ENCODE measurements at regions of chr20 and their contacts with region 1.

Region 1: GRCh38 chr20:38033310-38034107 is at the starts of genes RPRD1B and TTI1:
- DNase-seq: peak; percentile 93
- ATAC-seq: peak; percentile 85
- H3K4me3 Mint-ChIP-seq: peak within 1 kb of the TSS; percentile 94
- H3K27ac Mint-ChIP-seq: peak within 1 kb of the TSS; percentile 98
- H3K4me1 Mint-ChIP-seq: peaks cover 65% of the 10 kb centered on the region
- H3K27me3 Mint-ChIP-seq: no peaks in the 10 kb centered on the region
- total RNA-seq, gene RPRD1B: 29.9 to 36.4 TPM
- total RNA-seq, gene TTI1: 35.6 to 36.7 TPM

Region 2: DNA sequence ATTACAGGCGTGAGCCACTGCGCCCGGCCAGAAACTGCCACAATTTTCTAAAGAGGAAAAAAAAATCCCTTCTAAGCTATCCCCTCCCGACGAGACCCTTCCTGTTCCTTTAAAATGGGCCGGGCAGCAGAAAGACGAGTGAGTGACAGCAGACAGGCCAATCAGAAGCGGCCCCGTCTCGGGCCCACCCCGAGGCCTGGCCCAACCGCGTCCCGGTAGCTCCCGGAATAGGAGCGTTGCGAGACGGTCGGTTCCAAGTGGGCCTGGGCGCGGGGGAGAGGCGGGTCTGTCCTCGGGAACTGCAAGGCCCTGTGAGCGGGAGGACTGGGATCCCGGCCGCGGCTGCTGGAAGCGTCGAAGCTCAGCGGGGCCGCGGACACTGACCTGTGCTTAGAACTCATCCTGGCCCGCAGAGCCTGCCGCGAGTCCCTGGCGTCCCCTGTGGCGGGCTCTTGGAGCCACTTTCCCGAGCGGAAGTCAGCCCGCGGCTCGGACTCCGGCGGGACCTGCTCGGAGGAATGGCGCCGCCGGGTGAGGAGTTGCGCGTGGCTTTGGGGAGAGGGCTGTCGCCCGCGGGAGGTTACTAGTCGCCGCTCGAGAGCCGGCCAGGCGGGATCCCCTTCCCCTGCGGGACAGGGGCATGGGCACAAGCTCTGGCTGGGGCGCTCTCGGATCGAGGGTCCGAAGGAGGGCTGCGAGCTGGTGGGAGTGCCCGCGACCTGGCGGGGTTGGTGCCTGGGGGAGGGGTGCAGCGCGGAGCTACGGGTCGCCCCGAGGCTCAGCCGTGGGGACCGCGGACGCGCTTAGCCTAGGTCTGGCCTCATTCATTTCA is 854.5 kb before region 1 on chr20 and contains the starts of genes MROH8 and RPN2:
- CTCF ChIA-PET with region 1: no interaction called
- POLR2A ChIA-PET with region 1: no interaction called
- intact Hi-C with region 1: loop called in 1 of 2 experiments (anchors 1 kb)
- DNase-seq: peak; percentile 98
- ATAC-seq: peak; percentile 97
- H3K4me3 Mint-ChIP-seq: peak within 1 kb of the TSS; percentile 87
- H3K27ac Mint-ChIP-seq: peak within 1 kb of the TSS; percentile 92
- H3K4me1 Mint-ChIP-seq: peaks cover 33% of the 10 kb centered on the region
- H3K27me3 Mint-ChIP-seq: no peaks in the 10 kb centered on the region
- total RNA-seq, gene MROH8: 3.0 to 4.5 TPM
- total RNA-seq, gene RPN2: 103 to 115 TPM

Region 3: GRCh38 chr20:37693635-37694626 is 339.6 kb before region 1 on chr20 and contains the start of gene CTNNBL1:
- CTCF ChIA-PET with region 1: no interaction called
- POLR2A ChIA-PET with region 1: no interaction called
- intact Hi-C with region 1: loop called in 1 of 2 experiments (anchors 1 kb)
- DNase-seq: peak; percentile 99
- ATAC-seq: peak; percentile 98
- H3K4me3 Mint-ChIP-seq: peak within 1 kb of the TSS; percentile 100
- H3K27ac Mint-ChIP-seq: peak within 1 kb of the TSS; percentile 96
- H3K4me1 Mint-ChIP-seq: peaks cover 31% of the 10 kb centered on the region
- H3K27me3 Mint-ChIP-seq: peaks cover 14% of the 10 kb centered on the region
- total RNA-seq, gene CTNNBL1: 72.6 to 93.4 TPM

Region 4: GRCh38 chr20:38057351-38057972 is 24.0 kb after region 1 on chr20:
- CTCF ChIA-PET with region 1: interaction called, 6 read pairs
- POLR2A ChIA-PET with region 1: interaction called, 3 read pairs
- intact Hi-C with region 1: loop called in 1 of 2 experiments (anchors 2 kb)
- DNase-seq: peak; percentile 87
- ATAC-seq: peak; percentile 92
- H3K4me3 Mint-ChIP-seq: peak overlapping the region; percentile 29
- H3K27ac Mint-ChIP-seq: peak overlapping the region; percentile 86
- H3K4me1 Mint-ChIP-seq: peaks cover 34% of the 10 kb centered on the region
- H3K27me3 Mint-ChIP-seq: no peaks in the 10 kb centered on the region

Region 5: GRCh38 chr20:38113401-38114325 is 80.2 kb after region 1 on chr20:
- CTCF ChIA-PET with region 1: no interaction called
- POLR2A ChIA-PET with region 1: no interaction called
- intact Hi-C with region 1: no loop called
- DNase-seq: peak; percentile 43
- ATAC-seq: no peak
- H3K4me3 Mint-ChIP-seq: no peak overlapping the region
- H3K27ac Mint-ChIP-seq: no peak overlapping the region
- H3K4me1 Mint-ChIP-seq: no peaks in the 10 kb centered on the region
- H3K27me3 Mint-ChIP-seq: no peaks in the 10 kb centered on the region

Region 6: DNA sequence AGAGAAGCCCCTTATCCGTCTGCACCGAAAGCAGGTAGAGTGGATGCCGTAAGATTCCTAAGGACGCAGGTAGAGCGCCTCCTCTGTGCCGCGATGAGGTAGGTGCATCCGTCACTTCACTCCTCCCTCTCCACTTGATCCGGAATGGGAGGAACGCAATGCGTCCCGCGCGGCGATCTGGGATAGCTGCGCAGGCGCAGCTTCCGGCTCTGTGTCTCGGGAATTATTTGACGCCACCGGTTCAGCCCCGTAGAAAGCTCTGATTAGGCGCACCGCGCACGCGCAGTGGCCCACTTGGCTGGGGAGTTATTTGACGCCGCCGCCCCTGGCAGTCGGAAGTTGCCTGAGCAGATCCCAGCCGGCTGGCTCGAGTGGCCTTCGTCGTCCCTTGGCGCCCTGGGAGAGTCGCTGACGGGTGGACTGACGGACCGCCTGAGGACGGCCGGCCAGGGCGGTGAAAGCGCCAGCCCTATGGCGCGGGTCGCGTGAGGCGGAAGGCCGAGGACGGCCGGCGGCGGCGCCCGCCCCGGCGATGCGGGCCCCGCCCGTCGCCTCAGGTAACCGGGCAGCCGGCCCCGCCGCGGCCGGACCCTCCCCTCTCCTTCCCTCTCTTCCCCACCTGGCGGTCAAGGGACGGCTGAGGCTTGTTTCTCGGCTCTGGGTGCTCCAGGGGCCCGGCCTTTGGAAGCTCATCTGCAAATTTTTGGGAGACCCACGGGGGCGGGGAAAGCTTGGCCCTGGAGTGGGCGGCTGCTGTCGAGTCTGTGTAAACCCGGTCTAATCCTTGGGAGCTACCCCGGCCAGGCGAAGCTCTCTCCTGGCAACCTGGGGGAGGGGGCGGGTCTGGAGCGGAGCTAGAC is 439.2 kb after region 1 on chr20 and contains the start of gene RALGAPB:
- CTCF ChIA-PET with region 1: no interaction called
- POLR2A ChIA-PET with region 1: no interaction called
- intact Hi-C with region 1: loop called in 1 of 2 experiments (anchors 1 kb)
- DNase-seq: peak; percentile 99
- ATAC-seq: peak; percentile 96
- H3K4me3 Mint-ChIP-seq: peak within 1 kb of the TSS; percentile 85
- H3K27ac Mint-ChIP-seq: peak within 1 kb of the TSS; percentile 79
- H3K4me1 Mint-ChIP-seq: peaks cover 38% of the 10 kb centered on the region
- H3K27me3 Mint-ChIP-seq: no peaks in the 10 kb centered on the region
- total RNA-seq, gene RALGAPB: 23.5 to 27.1 TPM